HepG2 (cell line): ENCODE measurements at regions of chr21 and their contacts with region 1.

Region 1: GRCh38 chr21:39518138-39518846 is 66.5 kb downstream of the SH3BGR start:
- DNase-seq: peak; percentile 60
- ATAC-seq: peak; percentile 98
- H3K4me3 ChIP-seq: no peak overlapping the region
- H3K27ac ChIP-seq: no peak overlapping the region
- H3K4me1 ChIP-seq: no peaks in the 10 kb centered on the region
- H3K27me3 ChIP-seq: no peaks in the 10 kb centered on the region
- CTCF ChIP-seq: peak; percentile 88
- EP300 ChIP-seq: no peak
- POLR2A ChIP-seq: no peak
- RAD21 ChIP-seq: peak; percentile 81

Region 2: DNA sequence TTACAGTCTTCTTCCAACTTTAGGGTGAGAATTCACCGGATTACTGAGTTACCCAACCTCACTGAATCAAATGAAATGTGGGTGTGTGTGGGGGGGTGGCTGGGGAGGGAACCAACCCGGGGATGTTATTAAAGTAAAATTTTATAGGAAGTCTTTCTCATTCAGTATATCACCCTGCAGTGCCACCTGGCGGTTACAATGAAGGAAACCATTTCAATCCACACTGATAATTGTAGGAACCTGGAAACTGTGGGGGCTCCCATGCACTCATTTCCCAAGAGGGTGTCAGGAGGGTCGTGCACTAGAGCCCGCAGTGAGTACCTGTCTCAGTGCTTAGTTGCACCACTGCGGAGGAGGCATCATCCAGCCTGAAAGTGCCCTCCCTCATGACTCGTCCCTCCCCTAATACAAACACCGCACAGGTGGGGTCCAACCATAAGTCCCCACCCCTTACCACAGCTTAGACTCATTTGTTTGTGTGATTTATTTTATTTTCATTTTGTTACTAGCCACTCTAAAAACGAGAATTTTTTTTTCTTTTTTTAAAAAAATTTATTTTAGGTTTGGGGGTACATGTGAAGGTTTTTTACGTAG is 197.6 kb after region 1 on chr21:
- CTCF ChIA-PET with region 1: interaction called, 59 read pairs
- POLR2A ChIA-PET with region 1: interaction called, 3 read pairs
- in situ Hi-C with region 1: loop called (anchors 5 kb)
- intact Hi-C with region 1: loop called (anchors 1 kb)
- DNase-seq: peak; percentile 33
- ATAC-seq: peak; percentile 61
- H3K4me3 ChIP-seq: no peak overlapping the region
- H3K27ac ChIP-seq: no peak overlapping the region
- H3K4me1 ChIP-seq: no peaks in the 10 kb centered on the region
- H3K27me3 ChIP-seq: no peaks in the 10 kb centered on the region; a peak in 1 of 5 replicates
- CTCF ChIP-seq: peak; percentile 60
- EP300 ChIP-seq: no peak
- POLR2A ChIP-seq: no peak
- RAD21 ChIP-seq: no peak

Region 3: DNA sequence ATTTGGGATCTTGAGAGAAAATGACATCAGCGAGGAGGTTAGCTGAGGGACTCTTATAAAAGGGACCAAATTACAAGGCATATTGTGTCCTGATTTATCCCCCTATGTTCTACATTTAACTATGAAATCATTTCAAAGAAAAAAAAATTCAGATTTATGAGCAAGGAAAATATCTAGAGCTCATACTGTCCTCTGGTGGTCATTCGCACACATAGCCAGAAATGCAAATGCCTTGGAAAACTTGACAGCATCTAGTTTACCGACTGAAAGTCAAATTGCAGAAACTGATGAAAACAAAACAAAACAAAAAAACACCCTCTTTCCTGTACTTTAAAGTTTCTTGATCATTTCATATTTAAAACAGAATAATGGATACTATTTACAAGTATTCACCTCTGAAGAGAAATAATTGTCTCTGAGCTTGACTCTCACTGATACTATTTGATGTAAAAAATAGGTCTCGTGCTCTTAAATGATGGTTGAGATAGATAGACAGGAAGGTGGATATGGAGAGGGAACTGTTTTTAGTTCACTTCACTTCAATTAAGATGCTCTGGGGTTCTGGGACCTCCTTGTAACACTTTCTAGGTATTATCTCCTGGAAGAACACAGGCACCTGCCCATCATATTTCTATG is 602.8 kb after region 1 on chr21:
- CTCF ChIA-PET with region 1: no interaction called
- POLR2A ChIA-PET with region 1: no interaction called
- in situ Hi-C with region 1: no loop called
- intact Hi-C with region 1: loop called (anchors 5 kb)
- DNase-seq: peak; percentile 2
- ATAC-seq: no peak
- H3K4me3 ChIP-seq: no peak overlapping the region
- H3K27ac ChIP-seq: no peak overlapping the region
- H3K4me1 ChIP-seq: no peaks in the 10 kb centered on the region
- H3K27me3 ChIP-seq: no peaks in the 10 kb centered on the region
- CTCF ChIP-seq: peak; percentile 56
- EP300 ChIP-seq: no peak
- POLR2A ChIP-seq: no peak
- RAD21 ChIP-seq: 0 out of 2 replicates have a peak, but pooled peaks have one; percentile 13